WTC11 (cell line): ENCODE measurements at regions of chr19 and their contacts with region 1.

Region 1: DNA sequence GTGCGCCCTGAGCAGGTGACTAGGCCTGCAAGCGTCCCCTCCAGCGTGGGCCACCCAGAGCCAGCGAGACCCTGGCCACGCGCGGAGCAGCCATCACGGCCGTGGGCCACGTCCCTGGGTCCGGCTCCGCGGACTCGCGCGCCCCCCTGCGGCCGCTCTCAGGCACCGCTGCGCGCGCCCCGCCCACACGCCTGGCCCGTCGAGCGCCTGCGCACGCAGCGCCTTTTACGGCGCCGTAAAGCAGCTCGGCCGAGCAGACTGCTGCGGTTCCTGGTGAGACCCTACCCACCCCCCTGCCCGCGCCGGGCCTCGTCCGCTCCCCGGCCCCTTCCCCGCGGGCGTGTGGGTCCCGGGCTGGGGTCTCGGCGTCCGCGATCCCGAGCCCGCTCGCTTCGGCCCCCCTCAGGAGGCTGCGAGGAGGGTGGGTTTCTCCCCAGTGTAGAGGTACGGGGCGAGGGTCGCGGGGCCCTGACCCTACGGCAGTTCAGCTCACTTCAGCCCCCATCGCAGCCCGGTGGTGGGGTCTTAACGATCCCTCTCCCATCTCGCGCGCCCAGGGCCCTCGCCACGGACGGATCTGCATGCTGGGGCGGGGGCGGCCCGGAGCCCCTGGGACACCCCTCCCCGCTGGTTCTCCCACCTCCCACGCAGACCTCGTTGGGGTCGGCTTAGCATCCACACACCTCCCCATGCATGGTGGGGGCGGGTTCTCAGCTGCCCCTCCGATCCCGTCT is at the start of gene TRAPPC5:
- DNase-seq: peak; percentile 86
- ATAC-seq: peak; percentile 60
- H3K4me3 Mint-ChIP-seq: peak within 1 kb of the TSS; percentile 79
- H3K27ac Mint-ChIP-seq: no peak within 1 kb of the TSS
- H3K4me1 Mint-ChIP-seq: peaks cover 16% of the 10 kb centered on the region
- H3K27me3 Mint-ChIP-seq: peaks cover 37% of the 10 kb centered on the region
- CTCF ChIP-seq: peak; percentile 82
- total RNA-seq, gene TRAPPC5: 122 to 127 TPM (median 124 TPM) in 3 replicates

Region 2: GRCh38 chr19:7421896-7422744 is 258.7 kb before region 1 on chr19:
- CTCF ChIA-PET with region 1: no interaction called
- POLR2A ChIA-PET with region 1: no interaction called
- DNase-seq: no peak
- ATAC-seq: no peak
- H3K4me3 Mint-ChIP-seq: no peak overlapping the region
- H3K27ac Mint-ChIP-seq: peak overlapping the region; percentile 39; the same call in 1 of the 2 replicates
- H3K4me1 Mint-ChIP-seq: peaks cover 7% of the 10 kb centered on the region
- H3K27me3 Mint-ChIP-seq: no peaks in the 10 kb centered on the region; the same call in 1 of the 2 replicates
- CTCF ChIP-seq: no peak

Region 3: DNA sequence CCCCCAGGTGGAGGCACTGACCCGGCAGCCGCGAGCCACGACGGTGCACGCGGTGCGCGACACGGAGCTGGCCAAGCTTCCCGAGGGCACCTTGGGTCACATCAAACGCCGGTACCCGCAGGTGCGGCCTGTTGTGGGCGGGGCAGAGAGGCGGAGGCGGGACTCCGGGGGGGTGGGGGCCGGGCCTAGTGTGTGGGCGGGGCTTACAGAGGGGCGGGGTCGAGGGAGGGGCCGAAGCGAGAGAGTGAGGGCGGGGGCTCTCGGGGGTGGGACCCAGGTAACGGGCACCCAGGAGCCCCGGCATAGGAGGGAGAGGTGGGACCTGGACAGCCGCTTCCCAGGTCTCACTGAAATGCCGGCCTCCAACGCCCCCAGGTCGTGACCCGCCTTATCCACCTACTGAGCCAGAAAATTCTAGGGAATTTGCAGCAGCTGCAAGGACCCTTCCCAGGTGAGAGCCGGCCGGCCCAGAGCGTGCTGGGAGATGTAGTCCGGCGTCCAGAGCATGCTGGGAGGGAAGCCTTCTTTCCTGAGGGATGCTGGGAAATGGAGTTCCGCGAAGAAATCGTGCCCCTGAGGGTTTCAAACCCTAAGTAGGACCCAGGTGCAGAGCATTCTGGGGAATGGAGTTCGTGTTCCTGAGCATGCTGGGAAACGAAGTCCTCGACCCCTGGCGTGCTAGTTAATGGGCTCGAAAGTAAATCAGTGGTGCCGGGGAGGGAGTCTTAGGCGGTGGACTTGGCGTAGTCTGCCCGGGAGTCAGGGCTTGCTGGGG is 129.6 kb before region 1 on chr19:
- CTCF ChIA-PET with region 1: interaction called, 17 read pairs
- POLR2A ChIA-PET with region 1: no interaction called
- DNase-seq: peak; percentile 95
- ATAC-seq: peak; percentile 86
- H3K4me3 Mint-ChIP-seq: peak overlapping the region; percentile 74
- H3K27ac Mint-ChIP-seq: peak overlapping the region; percentile 71
- H3K4me1 Mint-ChIP-seq: peaks cover 8% of the 10 kb centered on the region
- H3K27me3 Mint-ChIP-seq: peaks cover 5% of the 10 kb centered on the region; the same call in 1 of the 2 replicates
- CTCF ChIP-seq: no peak

Region 4: GRCh38 chr19:7589822-7590221 is 91.0 kb before region 1 on chr19:
- CTCF ChIA-PET with region 1: no interaction called
- POLR2A ChIA-PET with region 1: no interaction called
- DNase-seq: no peak
- ATAC-seq: no peak
- H3K4me3 Mint-ChIP-seq: no peak overlapping the region
- H3K27ac Mint-ChIP-seq: no peak overlapping the region
- H3K4me1 Mint-ChIP-seq: no peaks in the 10 kb centered on the region
- H3K27me3 Mint-ChIP-seq: peaks cover 15% of the 10 kb centered on the region
- CTCF ChIP-seq: no peak

Region 5: DNA sequence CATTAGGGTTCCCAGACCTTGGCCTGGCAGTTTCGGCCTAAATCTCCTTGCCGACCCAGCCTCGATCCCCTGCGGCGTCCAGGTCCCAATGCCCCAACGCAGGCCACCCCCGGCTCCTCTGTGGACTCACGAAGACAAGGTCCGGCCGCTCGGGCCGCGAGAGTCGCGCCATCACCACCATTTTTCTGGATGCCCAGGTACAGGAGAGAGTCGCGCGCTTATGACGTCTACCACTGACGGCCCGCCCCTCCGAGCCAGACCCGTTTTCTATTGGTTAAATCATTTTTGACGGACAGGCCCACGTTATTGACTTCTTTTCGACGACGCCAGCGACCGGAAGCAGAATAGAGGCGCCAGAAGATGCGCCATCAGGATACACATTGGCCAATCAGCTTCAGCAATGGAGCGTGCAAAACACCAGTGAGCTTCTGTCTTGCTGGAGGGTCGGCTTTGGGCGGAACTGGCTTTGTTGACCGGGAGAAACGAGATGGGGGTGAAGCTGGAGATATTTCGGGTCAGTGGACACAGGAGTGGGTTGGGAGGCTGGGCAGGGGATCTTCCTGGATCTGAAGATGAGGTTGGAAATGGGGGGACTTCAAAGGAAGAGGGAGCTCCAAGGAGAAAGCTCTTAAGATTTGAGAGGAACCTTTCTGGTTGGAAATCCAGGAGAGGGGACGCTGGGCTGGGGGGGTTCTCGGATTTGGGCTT is 51.3 kb before region 1 on chr19 and contains the starts of genes PET100 and XAB2:
- CTCF ChIA-PET with region 1: interaction called, 14 read pairs
- POLR2A ChIA-PET with region 1: no interaction called
- DNase-seq: peak; percentile 92
- ATAC-seq: peak; percentile 95
- H3K4me3 Mint-ChIP-seq: peak within 1 kb of the TSS; percentile 90
- H3K27ac Mint-ChIP-seq: peak within 1 kb of the TSS; percentile 98
- H3K4me1 Mint-ChIP-seq: peaks cover 24% of the 10 kb centered on the region
- H3K27me3 Mint-ChIP-seq: peaks cover 6% of the 10 kb centered on the region
- CTCF ChIP-seq: no peak
- total RNA-seq, gene PET100: 111 to 126 TPM (median 122 TPM) in 3 replicates
- total RNA-seq, gene XAB2: 65.7 to 71.9 TPM (median 67.4 TPM) in 3 replicates

Region 6: GRCh38 chr19:7658219-7658686 is 22.5 kb before region 1 on chr19:
- CTCF ChIA-PET with region 1: interaction called, 19 read pairs
- POLR2A ChIA-PET with region 1: no interaction called
- DNase-seq: no peak
- ATAC-seq: peak; percentile 60; the same call in 1 of the 2 replicates
- H3K4me3 Mint-ChIP-seq: no peak overlapping the region
- H3K27ac Mint-ChIP-seq: no peak overlapping the region
- H3K4me1 Mint-ChIP-seq: no peaks in the 10 kb centered on the region
- H3K27me3 Mint-ChIP-seq: peaks cover 44% of the 10 kb centered on the region
- CTCF ChIP-seq: no peak

Region 7: DNA sequence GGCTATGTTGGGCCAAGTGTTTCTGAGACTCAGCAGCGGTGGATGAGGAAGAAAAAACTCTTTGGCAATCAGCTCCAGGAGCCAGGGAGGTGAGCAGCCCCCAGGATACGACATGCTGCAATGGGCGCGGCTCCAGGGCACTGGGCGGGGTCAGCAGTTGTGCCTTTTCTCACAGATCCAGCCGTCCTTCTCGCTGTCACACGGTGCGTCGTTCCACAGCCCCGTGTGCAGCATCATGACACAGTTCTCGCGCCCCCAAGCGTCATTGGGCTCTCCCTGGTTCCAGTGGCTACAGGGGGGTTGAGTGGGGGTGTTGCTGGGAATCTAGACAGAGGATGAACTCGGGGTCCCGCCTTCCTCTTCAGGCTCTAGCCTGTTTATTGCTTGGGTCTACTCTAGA is 48.4 kb after region 1 on chr19:
- CTCF ChIA-PET with region 1: interaction called, 14 read pairs
- POLR2A ChIA-PET with region 1: no interaction called
- DNase-seq: peak; percentile 46
- ATAC-seq: peak; percentile 41
- H3K4me3 Mint-ChIP-seq: peak overlapping the region; percentile 80
- H3K27ac Mint-ChIP-seq: no peak overlapping the region
- H3K4me1 Mint-ChIP-seq: peaks cover 13% of the 10 kb centered on the region
- H3K27me3 Mint-ChIP-seq: peaks cover 73% of the 10 kb centered on the region
- CTCF ChIP-seq: no peak

Region 8: GRCh38 chr19:7806234-7806633 is 125.5 kb after region 1 on chr19:
- CTCF ChIA-PET with region 1: interaction called, 18 read pairs
- POLR2A ChIA-PET with region 1: no interaction called
- DNase-seq: no peak
- ATAC-seq: no peak
- H3K4me3 Mint-ChIP-seq: no peak overlapping the region
- H3K27ac Mint-ChIP-seq: no peak overlapping the region
- H3K4me1 Mint-ChIP-seq: no peaks in the 10 kb centered on the region
- H3K27me3 Mint-ChIP-seq: peaks cover 40% of the 10 kb centered on the region
- CTCF ChIP-seq: no peak

Region 9: DNA sequence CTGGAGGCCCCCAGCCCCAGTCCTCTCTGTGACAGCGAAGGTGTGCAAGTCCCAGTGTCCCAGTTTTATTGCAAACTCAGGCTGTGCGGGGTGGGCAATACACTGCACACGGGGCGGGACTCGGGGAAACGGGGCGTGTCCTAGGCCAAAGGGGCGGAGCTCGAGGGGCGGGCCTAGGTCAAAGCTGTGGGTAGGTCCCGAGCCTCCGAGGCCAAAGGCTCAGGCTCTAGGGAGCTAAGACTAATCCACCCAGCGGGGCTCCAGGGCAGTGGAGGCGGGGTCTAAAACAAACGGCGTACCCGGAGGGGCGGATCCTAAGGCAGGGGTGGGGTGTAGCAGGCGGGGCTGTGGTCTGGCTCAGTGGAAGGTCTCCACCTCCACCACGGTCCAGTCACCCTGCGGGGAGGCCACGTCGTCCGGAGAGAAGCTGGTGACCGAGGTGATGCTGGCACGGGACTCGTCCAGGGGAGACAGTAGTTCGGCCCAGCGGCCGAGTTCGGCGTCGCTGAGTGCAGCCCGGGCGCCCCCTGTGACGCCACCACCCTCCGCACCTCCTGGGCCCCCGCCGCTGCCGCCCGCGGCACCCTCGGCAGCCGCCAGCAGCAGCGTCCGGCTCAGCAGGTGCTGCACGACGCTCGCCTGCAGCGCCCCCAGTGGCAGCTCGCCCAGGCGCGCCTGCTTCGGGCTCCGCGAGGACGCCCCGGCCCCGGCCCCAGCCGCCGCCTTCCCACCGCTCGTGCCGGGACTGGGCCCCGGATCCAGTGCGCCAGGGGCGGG is 188.1 kb after region 1 on chr19:
- CTCF ChIA-PET with region 1: interaction called, 12 read pairs
- POLR2A ChIA-PET with region 1: interaction called, 5 read pairs
- DNase-seq: peak; percentile 95
- ATAC-seq: peak; percentile 41
- H3K4me3 Mint-ChIP-seq: peak overlapping the region; percentile 63
- H3K27ac Mint-ChIP-seq: peak overlapping the region; percentile 78; the same call in 1 of the 2 replicates
- H3K4me1 Mint-ChIP-seq: peaks cover 28% of the 10 kb centered on the region
- H3K27me3 Mint-ChIP-seq: peaks cover 62% of the 10 kb centered on the region
- CTCF ChIP-seq: peak; percentile 77